ENCODE measurements at regions of chr6 and their contacts with region 1.

Region 1: DNA sequence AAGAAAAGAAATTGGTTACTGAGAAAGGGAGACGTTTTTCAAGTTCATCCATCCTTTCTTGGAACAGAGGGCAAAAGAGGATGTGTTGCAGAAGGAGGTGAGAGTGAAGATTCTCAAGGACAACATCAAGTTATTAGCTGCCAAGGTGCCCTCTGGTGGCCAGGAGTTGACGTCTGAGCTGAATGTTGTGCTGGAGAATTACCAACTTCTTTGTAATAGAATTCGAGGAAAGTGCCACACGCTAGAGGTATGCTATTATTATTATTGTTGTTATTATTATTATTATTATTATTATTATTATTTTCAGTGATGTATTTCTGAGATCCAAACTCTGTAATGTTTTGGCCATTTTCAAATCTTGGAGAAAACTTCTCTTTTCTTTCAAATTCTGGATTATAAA is 197.0 kb downstream of the UTRN start:
- DNase-seq: peak; percentile 55 to 81 (median 68)
- ATAC-seq: peak; percentile 77
- H3K4me3 ChIP-seq: no peak overlapping the region
- H3K4me3 Mint-ChIP-seq: no peak overlapping the region
- H3K27ac ChIP-seq: no peak overlapping the region
- H3K27ac Mint-ChIP-seq: peak overlapping the region; percentile 31
- H3K4me1 ChIP-seq: no peaks in the 10 kb centered on the region
- H3K4me1 Mint-ChIP-seq: no peaks in the 10 kb centered on the region
- H3K27me3 ChIP-seq: no peaks in the 10 kb centered on the region
- H3K27me3 Mint-ChIP-seq: no peaks in the 10 kb centered on the region
- CTCF ChIP-seq: peak; percentile 82

Region 2: GRCh38 chr6:143928853-143929252 is 553.3 kb before region 1 on chr6:
- CTCF ChIA-PET with region 1: no interaction called
- POLR2A ChIA-PET with region 1: no interaction called
- intact Hi-C with region 1: no loop called
- DNase-seq: no peak
- ATAC-seq: no peak
- H3K4me3 ChIP-seq: no peak overlapping the region
- H3K4me3 Mint-ChIP-seq: no peak overlapping the region
- H3K27ac ChIP-seq: no peak overlapping the region
- H3K27ac Mint-ChIP-seq: no peak overlapping the region
- H3K4me1 ChIP-seq: no peaks in the 10 kb centered on the region
- H3K4me1 Mint-ChIP-seq: no peaks in the 10 kb centered on the region
- H3K27me3 ChIP-seq: no peaks in the 10 kb centered on the region
- H3K27me3 Mint-ChIP-seq: no peaks in the 10 kb centered on the region
- CTCF ChIP-seq: no peak

Region 3: GRCh38 chr6:144262470-144263369 is 219.4 kb before region 1 on chr6:
- CTCF ChIA-PET with region 1: interaction called, 16 read pairs
- POLR2A ChIA-PET with region 1: interaction called, 3 read pairs
- intact Hi-C with region 1: loop called (anchors 1 kb)
- DNase-seq: peak in 12 of 14 experiments; percentile 7 to 59 (median 36)
- ATAC-seq: no peak
- H3K4me3 ChIP-seq: no peak overlapping the region
- H3K4me3 Mint-ChIP-seq: no peak overlapping the region
- H3K27ac ChIP-seq: no peak overlapping the region
- H3K27ac Mint-ChIP-seq: no peak overlapping the region
- H3K4me1 ChIP-seq: no peaks in the 10 kb centered on the region
- H3K4me1 Mint-ChIP-seq: no peaks in the 10 kb centered on the region
- H3K27me3 ChIP-seq: no peaks in the 10 kb centered on the region
- H3K27me3 Mint-ChIP-seq: no peaks in the 10 kb centered on the region
- CTCF ChIP-seq: no peak